ENCODE measurements at regions of chr1 and their contacts with region 1.

Region 1: GRCh38 chr1:226121587-226122400 is 59.3 kb downstream of the H3-3A start:
- DNase-seq: peak; percentile 66
- H3K4me3 ChIP-seq: peak overlapping the region; percentile 81
- H3K27ac ChIP-seq: peak overlapping the region; percentile 81
- H3K4me1 ChIP-seq: peaks cover 19% of the 10 kb centered on the region
- H3K27me3 ChIP-seq: no peaks in the 10 kb centered on the region
- CTCF ChIP-seq: peak; percentile 95

Region 2: GRCh38 chr1:226061841-226062557 is 59.8 kb before region 1 on chr1:
- intact Hi-C with region 1: loop called (anchors 5 kb)
- DNase-seq: peak; percentile 82
- H3K4me3 ChIP-seq: peak overlapping the region; percentile 82
- H3K27ac ChIP-seq: peak overlapping the region; percentile 99
- H3K4me1 ChIP-seq: peaks cover 58% of the 10 kb centered on the region
- H3K27me3 ChIP-seq: no peaks in the 10 kb centered on the region
- CTCF ChIP-seq: no peak

Region 3: DNA sequence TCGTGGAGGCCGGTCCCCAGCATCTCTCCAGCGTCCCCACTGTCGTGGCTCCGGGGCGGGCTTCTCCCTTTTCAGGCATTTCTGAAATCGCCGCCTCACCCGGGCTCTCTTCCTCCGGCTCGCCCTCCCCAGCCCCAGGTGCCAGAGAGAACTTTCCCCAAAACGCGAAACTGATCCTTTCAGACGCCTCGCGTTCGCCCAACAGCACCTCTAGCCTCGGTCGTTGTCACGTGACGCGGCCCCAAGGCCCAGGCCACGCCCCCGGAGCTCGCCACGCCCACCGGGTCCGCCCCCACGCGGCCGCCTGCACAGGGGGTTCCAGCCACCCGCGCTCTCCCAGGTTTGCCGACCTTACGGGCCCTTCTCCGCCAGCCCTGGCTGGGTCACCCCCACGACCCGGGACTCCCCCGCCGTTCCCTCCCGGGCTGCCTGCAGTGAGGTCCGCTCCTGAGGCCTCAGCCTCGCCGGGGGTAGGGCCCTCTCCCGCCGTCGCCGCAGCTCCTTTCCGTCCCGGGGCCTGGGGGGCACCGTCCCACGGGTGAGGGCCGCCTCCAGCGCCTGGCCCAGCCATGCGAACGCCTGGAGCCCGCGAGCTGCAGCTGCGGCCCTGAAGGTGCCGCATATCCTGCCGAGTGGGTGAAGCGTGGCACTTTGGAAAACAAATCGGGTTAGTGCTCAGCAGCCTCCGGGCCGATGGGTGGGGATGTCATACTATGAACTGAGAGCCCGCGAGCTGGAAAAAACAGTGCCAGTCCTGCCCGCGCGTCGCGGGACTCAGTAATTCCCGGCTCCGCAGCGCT is 38.3 kb before region 1 on chr1:
- intact Hi-C with region 1: loop called (anchors 5 kb)
- DNase-seq: peak; percentile 92
- H3K4me3 ChIP-seq: peak overlapping the region; percentile 84
- H3K27ac ChIP-seq: peak overlapping the region; percentile 73
- H3K4me1 ChIP-seq: peaks cover 18% of the 10 kb centered on the region
- H3K27me3 ChIP-seq: no peaks in the 10 kb centered on the region
- CTCF ChIP-seq: no peak

Measured in left ventricle myocardium inferior (tissue), 1 donor.